ENCODE measurements at regions of chr6 and their contacts with region 1.

Region 1: GRCh38 chr6:56708810-56709597 is 66.3 kb upstream of the DST start:
- DNase-seq: peak in 1 of 2 experiments; percentile 64
- ATAC-seq: peak; percentile 45 to 48; a peak in 3 of 6 replicates
- H3K4me3 ChIP-seq: no peak overlapping the region
- H3K27ac ChIP-seq: peak overlapping the region; percentile 49 to 74
- H3K4me1 ChIP-seq: peaks cover 51% of the 10 kb centered on the region
- CTCF ChIP-seq: peak; percentile 58
- EP300 ChIP-seq: no peak
- POLR2A ChIP-seq: no peak
- RAD21 ChIP-seq: peak; percentile 56 to 70

Region 2: DNA sequence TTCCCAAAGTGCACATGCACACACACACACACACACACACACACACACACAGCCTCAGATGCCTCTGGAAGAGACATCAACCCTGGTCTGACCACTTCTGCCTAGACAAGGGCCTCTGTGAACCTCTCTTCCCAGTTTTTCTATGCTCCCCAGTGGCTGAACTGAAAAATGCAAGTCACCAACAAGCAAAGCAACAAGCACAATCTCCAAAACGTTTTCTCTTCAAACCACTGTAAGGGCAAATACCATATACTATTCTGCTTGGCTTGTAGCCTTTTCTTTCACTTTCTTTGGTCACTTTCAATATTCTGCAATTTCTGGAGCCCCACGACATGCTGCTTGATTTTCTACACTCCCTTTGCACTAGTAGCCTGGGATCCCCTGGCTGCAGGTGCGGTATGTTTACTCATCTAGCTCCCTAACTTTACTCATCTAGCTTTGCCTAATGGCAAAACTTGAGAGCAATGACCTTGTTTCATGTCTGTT is 55.1 kb after region 1 on chr6:
- CTCF ChIA-PET with region 1: interaction called, 11 read pairs
- POLR2A ChIA-PET with region 1: no interaction called
- DNase-seq: peak; percentile 14 to 60
- ATAC-seq: peak; percentile 83 to 90
- H3K4me3 ChIP-seq: no peak overlapping the region
- H3K27ac ChIP-seq: peak overlapping the region; percentile 2 to 71; a peak in 3 of 6 replicates
- H3K4me1 ChIP-seq: peaks cover 39% of the 10 kb centered on the region
- CTCF ChIP-seq: peak; percentile 45
- EP300 ChIP-seq: no peak
- POLR2A ChIP-seq: no peak
- RAD21 ChIP-seq: peak; percentile 48 to 54

Region 3: GRCh38 chr6:56851541-56852259 is 142.7 kb after region 1 on chr6:
- CTCF ChIA-PET with region 1: interaction called, 67 read pairs
- POLR2A ChIA-PET with region 1: no interaction called
- DNase-seq: peak; percentile 46 to 65
- ATAC-seq: peak; percentile 92 to 94
- H3K4me3 ChIP-seq: no peak overlapping the region
- H3K27ac ChIP-seq: peak overlapping the region; percentile 24 to 74; a peak in 4 of 6 replicates
- H3K4me1 ChIP-seq: peaks cover 34% of the 10 kb centered on the region
- CTCF ChIP-seq: peak; percentile 67
- EP300 ChIP-seq: no peak
- POLR2A ChIP-seq: no peak
- RAD21 ChIP-seq: peak; percentile 74 to 81

Region 4: GRCh38 chr6:57421503-57421902 is 712.5 kb after region 1 on chr6:
- CTCF ChIA-PET with region 1: no interaction called
- POLR2A ChIA-PET with region 1: no interaction called
- DNase-seq: no peak
- ATAC-seq: no peak
- H3K4me3 ChIP-seq: no peak overlapping the region
- H3K27ac ChIP-seq: no peak overlapping the region
- H3K4me1 ChIP-seq: no peaks in the 10 kb centered on the region
- CTCF ChIP-seq: no peak
- EP300 ChIP-seq: no peak
- POLR2A ChIP-seq: no peak
- RAD21 ChIP-seq: no peak

Measured in A549 (cell line).